Activated CD8-positive, alpha-beta memory T cell treated with anti-CD3 and anti-CD28 coated beads, Interleukin-2, amount 10 ng/mL, durations not matched to agents 7 days and 5 days (primary cell): ENCODE measurements at regions of chr1 and their contacts with region 1.

Region 1: DNA sequence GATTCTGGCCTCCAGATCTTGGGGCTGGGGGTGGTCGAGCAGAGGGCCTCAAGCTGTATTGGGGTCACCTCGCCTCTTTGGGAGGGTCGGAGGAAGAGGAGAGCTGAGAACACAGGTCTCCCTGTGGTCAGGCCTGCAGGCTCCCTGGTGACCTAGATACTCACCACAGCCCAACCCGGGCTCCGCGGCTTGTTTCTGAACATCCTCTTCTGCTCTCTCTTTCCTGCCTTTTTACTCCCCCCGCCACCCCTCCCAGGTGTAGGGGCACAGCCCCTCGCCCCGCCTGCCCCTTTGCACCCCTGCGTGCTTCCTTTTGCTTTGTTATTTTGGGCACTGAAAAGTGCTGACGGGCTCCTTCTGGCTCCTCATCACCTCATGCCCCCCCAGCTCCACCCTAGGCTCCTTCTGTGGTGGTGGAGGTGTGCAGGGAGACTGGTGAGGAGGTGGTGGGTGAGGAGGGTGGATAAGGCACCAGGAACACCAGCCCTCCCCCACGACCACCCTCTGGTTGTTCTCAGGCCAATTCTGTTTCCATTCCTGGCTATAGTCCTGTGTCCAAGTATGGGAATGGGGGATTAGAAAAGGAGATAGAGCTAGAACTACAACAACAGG is 10.6 kb upstream of the LINGO4 start:
- DNase-seq: peak; percentile 78
- ATAC-seq: peak; percentile 76
- H3K4me3 Mint-ChIP-seq: no peak overlapping the region
- H3K27ac Mint-ChIP-seq: peak overlapping the region; percentile 73
- H3K4me1 Mint-ChIP-seq: peaks cover 47% of the 10 kb centered on the region
- H3K27me3 Mint-ChIP-seq: no peaks in the 10 kb centered on the region

Region 2: GRCh38 chr1:151837208-151837596 is 21.4 kb after region 1 on chr1:
- CTCF ChIA-PET with region 1: interaction called, 20 read pairs
- DNase-seq: peak; percentile 62
- ATAC-seq: peak; percentile 17
- H3K4me3 Mint-ChIP-seq: peak overlapping the region; percentile 68
- H3K27ac Mint-ChIP-seq: peak overlapping the region; percentile 89
- H3K4me1 Mint-ChIP-seq: peaks cover 54% of the 10 kb centered on the region
- H3K27me3 Mint-ChIP-seq: peaks cover 2% of the 10 kb centered on the region